ENCODE measurements at regions of chr13 and their contacts with region 1.

Region 1: GRCh38 chr13:41054212-41054877 is 7.0 kb upstream of the WBP4 start:
- DNase-seq: no peak
- H3K4me3 ChIP-seq: peak overlapping the region in 1 of 8 donors; percentile 10
- H3K27ac ChIP-seq: peak overlapping the region in 6 of 8 donors; percentile 45 to 66 (median 64)
- H3K4me1 ChIP-seq: peaks cover 16 to 98% (median 80%) of the 10 kb centered on the region in 6 donors
- H3K27me3 ChIP-seq: no peaks in the 10 kb centered on the region
- CTCF ChIP-seq: peak; percentile 10 to 58 (median 50)
- POLR2A ChIP-seq: no peak

Region 2: GRCh38 chr13:40190641-40191100 is 863.7 kb before region 1 on chr13:
- intact Hi-C with region 1: no loop called
- DNase-seq: peak; percentile 93
- H3K4me3 ChIP-seq: no peak overlapping the region
- H3K27ac ChIP-seq: peak overlapping the region in 7 of 8 donors; percentile 3 to 81 (median 66)
- H3K4me1 ChIP-seq: peaks cover 16 to 58% (median 28%) of the 10 kb centered on the region in 6 donors
- H3K27me3 ChIP-seq: no peaks in the 10 kb centered on the region
- CTCF ChIP-seq: no peak
- POLR2A ChIP-seq: no peak

Region 3: GRCh38 chr13:40789275-40790133 is 264.8 kb before region 1 on chr13 and contains the start of gene SLC25A15:
- intact Hi-C with region 1: loop called (anchors 10 kb)
- DNase-seq: peak; percentile 95
- H3K4me3 ChIP-seq: peak within 1 kb of the TSS; percentile 48 to 83 (median 59)
- H3K27ac ChIP-seq: peak within 1 kb of the TSS; percentile 73 to 88 (median 79)
- H3K4me1 ChIP-seq: peaks cover 0 to 24% (median 15%) of the 10 kb centered on the region in 6 donors
- H3K27me3 ChIP-seq: no peaks in the 10 kb centered on the region
- CTCF ChIP-seq: peak in 5 of 11 experiments; percentile 44 to 54 (median 50)
- POLR2A ChIP-seq: peak in 1 of 3 donors; percentile 40
- total RNA-seq, gene SLC25A15: 2.9 to 6.2 (median 4.4) TPM

Region 4: GRCh38 chr13:40922437-40923040 is 131.8 kb before region 1 on chr13:
- intact Hi-C with region 1: loop called (anchors 10 kb)
- DNase-seq: peak; percentile 79
- H3K4me3 ChIP-seq: no peak overlapping the region
- H3K27ac ChIP-seq: peak overlapping the region in 2 of 8 donors; percentile 87 to 88
- H3K4me1 ChIP-seq: peaks cover 6 to 21% (median 14%) of the 10 kb centered on the region in 6 donors
- H3K27me3 ChIP-seq: no peaks in the 10 kb centered on the region
- CTCF ChIP-seq: no peak
- POLR2A ChIP-seq: no peak

Region 5: DNA sequence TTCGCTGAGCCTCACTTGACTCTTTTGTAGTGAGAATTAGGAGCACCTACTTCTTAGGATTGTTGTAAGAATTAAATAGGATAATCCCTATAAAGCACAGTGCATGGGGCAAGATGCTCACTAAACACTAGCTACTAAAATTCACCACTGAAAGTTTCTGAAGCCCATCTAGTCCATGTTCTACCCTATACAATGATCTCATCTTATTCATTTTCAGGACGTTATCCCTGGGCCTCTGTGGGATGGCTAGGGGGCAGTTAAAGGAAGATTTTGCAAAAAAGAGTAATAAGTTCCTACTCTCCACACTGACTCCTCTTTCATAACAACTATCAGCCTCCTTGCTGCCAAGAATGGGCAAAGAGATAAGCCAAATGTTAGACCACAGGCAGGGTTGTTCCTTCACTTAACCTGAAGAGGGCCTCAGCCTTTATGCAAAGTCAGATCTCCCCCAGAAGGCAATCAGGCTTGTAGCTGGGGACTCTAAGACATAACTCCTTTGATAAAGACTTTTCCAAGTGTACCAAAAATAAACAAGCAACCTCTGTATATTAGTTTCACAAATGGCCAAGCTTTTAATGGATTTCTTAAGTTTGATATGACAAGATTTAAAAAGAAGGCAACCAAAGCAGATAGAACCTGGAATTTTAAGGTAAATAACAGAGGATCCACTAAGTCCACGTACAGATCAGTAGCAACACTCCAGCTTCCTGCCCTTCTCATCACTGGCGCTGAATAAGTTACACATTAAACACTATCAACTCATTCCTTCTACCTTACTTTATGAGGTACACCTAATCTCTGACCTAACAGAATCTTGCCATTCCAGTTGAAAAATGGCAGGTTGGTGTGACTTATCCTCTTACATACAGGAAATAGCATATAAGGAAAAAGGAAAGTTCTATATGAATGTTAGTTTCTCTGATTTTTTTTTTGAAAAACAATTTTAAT is 79.6 kb before region 1 on chr13:
- intact Hi-C with region 1: loop called (anchors 10 kb)
- DNase-seq: no peak
- H3K4me3 ChIP-seq: peak overlapping the region in 1 of 8 donors; percentile 17
- H3K27ac ChIP-seq: peak overlapping the region in 7 of 8 donors; percentile 24 to 98 (median 92)
- H3K4me1 ChIP-seq: peaks cover 83 to 100% (median 98%) of the 10 kb centered on the region in 6 donors
- H3K27me3 ChIP-seq: no peaks in the 10 kb centered on the region
- CTCF ChIP-seq: peak in 9 of 11 experiments; percentile 7 to 63 (median 55)
- POLR2A ChIP-seq: no peak

Measured in spleen (tissue), 13 donors.